CD4-positive, alpha-beta T cell (primary cell): ENCODE measurements at regions of chr6 and their contacts with region 1.

Region 1: DNA sequence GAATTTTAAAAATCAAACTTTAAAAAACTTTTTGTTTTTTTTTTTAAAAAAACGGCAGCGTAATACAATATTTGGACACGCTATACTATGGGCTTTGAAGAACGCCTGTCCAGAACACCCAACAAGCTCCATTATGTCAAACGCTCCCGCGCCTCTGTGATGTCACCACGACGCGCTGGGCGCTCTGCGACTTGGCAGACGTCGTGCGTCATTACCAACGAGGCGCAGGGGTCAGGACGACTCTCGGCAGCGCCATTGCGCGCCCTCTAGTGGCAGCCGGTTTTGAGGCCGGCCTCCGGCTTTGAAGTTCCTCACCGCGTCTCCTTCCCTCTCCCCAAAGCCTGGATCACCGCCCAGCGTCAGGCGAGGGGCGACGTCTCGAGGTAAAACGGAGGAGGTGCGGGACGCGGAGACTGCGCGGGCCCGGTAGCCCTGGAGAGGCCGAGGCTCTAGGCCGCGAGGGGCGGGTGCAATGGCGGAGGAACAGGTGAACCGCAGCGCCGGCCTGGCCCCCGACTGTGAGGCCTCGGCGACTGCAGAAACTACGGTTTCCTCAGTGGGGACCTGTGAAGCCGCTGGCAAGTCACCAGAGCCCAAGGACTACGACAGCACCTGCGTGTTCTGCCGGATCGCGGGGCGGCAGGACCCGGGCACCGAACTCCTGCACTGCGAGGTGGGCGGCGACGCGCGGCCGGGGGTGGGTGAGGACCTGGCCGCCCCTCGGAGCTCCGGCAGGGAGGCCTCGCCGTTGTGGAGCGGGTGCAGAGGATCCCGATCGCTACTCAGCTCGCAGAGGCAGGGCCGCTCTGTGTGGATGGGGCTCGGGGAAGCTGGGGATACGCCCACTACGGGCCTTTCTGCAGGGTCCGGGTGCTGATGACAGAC is at the start of gene HINT3:
- DNase-seq: peak; percentile 96 to 99 (median 98)
- ATAC-seq: peak; percentile 86
- H3K4me3 ChIP-seq: peak within 1 kb of the TSS; percentile 86
- H3K4me3 Mint-ChIP-seq: no peak within 1 kb of the TSS
- H3K27ac ChIP-seq: peak within 1 kb of the TSS; percentile 94 to 95
- H3K27ac Mint-ChIP-seq: no peak within 1 kb of the TSS
- H3K4me1 ChIP-seq: peaks cover 15% of the 10 kb centered on the region
- H3K4me1 Mint-ChIP-seq: peaks cover 22% of the 10 kb centered on the region
- H3K27me3 ChIP-seq: no peaks in the 10 kb centered on the region
- H3K27me3 Mint-ChIP-seq: no peaks in the 10 kb centered on the region
- CTCF ChIP-seq: peak; percentile 98
- total RNA-seq, gene HINT3: 10.4 TPM

Region 2: GRCh38 chr6:125314019-125314581 is 642.6 kb before region 1 on chr6:
- CTCF ChIA-PET with region 1: no interaction called
- POLR2A ChIA-PET with region 1: no interaction called
- intact Hi-C with region 1: loop called in 1 of 2 experiments (anchors 5 kb)
- DNase-seq: peak in 8 of 14 experiments; percentile 11 to 66 (median 38)
- ATAC-seq: no peak
- H3K4me3 ChIP-seq: no peak overlapping the region
- H3K4me3 Mint-ChIP-seq: no peak overlapping the region
- H3K27ac ChIP-seq: no peak overlapping the region
- H3K27ac Mint-ChIP-seq: no peak overlapping the region
- H3K4me1 ChIP-seq: no peaks in the 10 kb centered on the region
- H3K4me1 Mint-ChIP-seq: peaks cover 3% of the 10 kb centered on the region
- H3K27me3 ChIP-seq: peaks cover 0 to 12% of the 10 kb centered on the region in 2 experiments
- H3K27me3 Mint-ChIP-seq: peaks cover 16% of the 10 kb centered on the region
- CTCF ChIP-seq: peak; percentile 53

Region 3: GRCh38 chr6:125533710-125534397 is 422.9 kb before region 1 on chr6:
- CTCF ChIA-PET with region 1: no interaction called
- POLR2A ChIA-PET with region 1: no interaction called
- intact Hi-C with region 1: no loop called
- DNase-seq: no peak
- ATAC-seq: no peak
- H3K4me3 ChIP-seq: no peak overlapping the region
- H3K4me3 Mint-ChIP-seq: no peak overlapping the region
- H3K27ac ChIP-seq: no peak overlapping the region
- H3K27ac Mint-ChIP-seq: no peak overlapping the region
- H3K4me1 ChIP-seq: no peaks in the 10 kb centered on the region
- H3K4me1 Mint-ChIP-seq: no peaks in the 10 kb centered on the region
- H3K27me3 ChIP-seq: peaks cover 4 to 40% of the 10 kb centered on the region in 2 experiments
- H3K27me3 Mint-ChIP-seq: peaks cover 77% of the 10 kb centered on the region
- CTCF ChIP-seq: no peak

Region 4: GRCh38 chr6:125867483-125867935 is 89.2 kb before region 1 on chr6:
- CTCF ChIA-PET with region 1: no interaction called
- POLR2A ChIA-PET with region 1: no interaction called
- intact Hi-C with region 1: no loop called
- DNase-seq: no peak
- ATAC-seq: no peak
- H3K4me3 ChIP-seq: no peak overlapping the region
- H3K4me3 Mint-ChIP-seq: no peak overlapping the region
- H3K27ac ChIP-seq: no peak overlapping the region
- H3K27ac Mint-ChIP-seq: no peak overlapping the region
- H3K4me1 ChIP-seq: no peaks in the 10 kb centered on the region
- H3K4me1 Mint-ChIP-seq: no peaks in the 10 kb centered on the region
- H3K27me3 ChIP-seq: no peaks in the 10 kb centered on the region
- H3K27me3 Mint-ChIP-seq: no peaks in the 10 kb centered on the region
- CTCF ChIP-seq: no peak

Region 5: GRCh38 chr6:125906158-125906998 is 50.4 kb before region 1 on chr6:
- CTCF ChIA-PET with region 1: interaction called, 16 read pairs
- POLR2A ChIA-PET with region 1: no interaction called
- intact Hi-C with region 1: no loop called
- DNase-seq: peak; percentile 18 to 71 (median 32)
- ATAC-seq: peak; percentile 44
- H3K4me3 ChIP-seq: no peak overlapping the region
- H3K4me3 Mint-ChIP-seq: no peak overlapping the region
- H3K27ac ChIP-seq: no peak overlapping the region
- H3K27ac Mint-ChIP-seq: no peak overlapping the region
- H3K4me1 ChIP-seq: peaks cover 16% of the 10 kb centered on the region
- H3K4me1 Mint-ChIP-seq: peaks cover 7% of the 10 kb centered on the region
- H3K27me3 ChIP-seq: no peaks in the 10 kb centered on the region
- H3K27me3 Mint-ChIP-seq: no peaks in the 10 kb centered on the region
- CTCF ChIP-seq: peak; percentile 74

Region 6: GRCh38 chr6:125968493-125968892 is 11.7 kb after region 1 on chr6:
- CTCF ChIA-PET with region 1: interaction called, 21 read pairs
- POLR2A ChIA-PET with region 1: interaction called, 15 read pairs
- intact Hi-C with region 1: no loop called
- DNase-seq: no peak
- ATAC-seq: no peak
- H3K4me3 ChIP-seq: no peak overlapping the region
- H3K4me3 Mint-ChIP-seq: no peak overlapping the region
- H3K27ac ChIP-seq: no peak overlapping the region
- H3K27ac Mint-ChIP-seq: no peak overlapping the region
- H3K4me1 ChIP-seq: no peaks in the 10 kb centered on the region
- H3K4me1 Mint-ChIP-seq: peaks cover 51% of the 10 kb centered on the region
- H3K27me3 ChIP-seq: no peaks in the 10 kb centered on the region
- H3K27me3 Mint-ChIP-seq: no peaks in the 10 kb centered on the region
- CTCF ChIP-seq: no peak

Region 7: DNA sequence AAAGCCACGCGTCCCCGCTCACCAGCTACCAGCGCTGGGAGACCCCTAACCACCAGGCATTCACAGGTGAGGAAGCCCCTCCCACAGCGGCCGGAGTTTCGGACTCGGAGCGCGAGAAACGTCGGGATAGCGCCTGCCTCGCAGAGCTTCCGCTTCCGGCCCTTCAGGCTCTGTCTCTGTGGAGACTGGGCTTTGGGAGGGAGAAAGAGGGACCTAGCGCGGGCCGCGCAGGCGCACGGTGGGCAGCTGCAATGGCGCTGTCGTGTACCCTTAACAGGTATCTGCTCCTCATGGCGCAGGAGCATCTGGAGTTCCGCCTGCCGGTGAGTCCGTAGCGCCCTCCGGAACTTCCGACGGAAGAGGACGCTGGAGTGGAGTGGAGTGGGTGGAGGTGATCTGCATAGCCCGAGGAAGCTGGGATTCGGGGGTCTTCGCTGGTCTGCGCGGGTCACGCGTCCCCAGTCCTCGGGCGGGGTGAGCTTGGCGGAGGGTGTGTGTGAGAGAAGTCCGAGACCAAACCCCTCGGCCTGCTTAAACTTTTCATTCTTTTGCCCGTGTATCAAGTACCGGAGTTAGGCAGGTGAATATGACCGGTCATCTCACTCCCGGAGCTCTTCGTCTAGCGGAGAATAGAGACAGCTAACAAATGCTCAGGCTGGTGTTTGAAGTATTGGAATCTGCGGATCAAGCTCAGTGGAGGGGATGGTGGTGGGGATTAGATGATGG is 29.7 kb after region 1 on chr6 and contains the start of gene TRMT11:
- CTCF ChIA-PET with region 1: interaction called, 17 read pairs
- POLR2A ChIA-PET with region 1: interaction called, 61 read pairs
- intact Hi-C with region 1: no loop called
- DNase-seq: peak; percentile 63 to 92 (median 76)
- ATAC-seq: peak; percentile 95
- H3K4me3 ChIP-seq: peak within 1 kb of the TSS; percentile 89
- H3K4me3 Mint-ChIP-seq: peak within 1 kb of the TSS; percentile 52
- H3K27ac ChIP-seq: peak within 1 kb of the TSS; percentile 54 to 88
- H3K27ac Mint-ChIP-seq: no peak within 1 kb of the TSS
- H3K4me1 ChIP-seq: peaks cover 13% of the 10 kb centered on the region
- H3K4me1 Mint-ChIP-seq: no peaks in the 10 kb centered on the region
- H3K27me3 ChIP-seq: no peaks in the 10 kb centered on the region
- H3K27me3 Mint-ChIP-seq: no peaks in the 10 kb centered on the region
- CTCF ChIP-seq: no peak
- total RNA-seq, gene TRMT11: 21.6 to 22.5 TPM